ENCODE measurements at regions of chr6 and their contacts with region 1.

Region 1: GRCh38 chr6:29632789-29633533 is at the start of gene GABBR1:
- DNase-seq: peak; percentile 92
- H3K4me3 ChIP-seq: peak within 1 kb of the TSS; percentile 60 to 84 (median 65)
- H3K27ac ChIP-seq: peak within 1 kb of the TSS; percentile 22
- H3K4me1 ChIP-seq: peaks cover 43% of the 10 kb centered on the region
- H3K27me3 ChIP-seq: no peaks in the 10 kb centered on the region
- CTCF ChIP-seq: no peak
- total RNA-seq, gene GABBR1: 14.5 to 78.4 TPM

Region 2: DNA sequence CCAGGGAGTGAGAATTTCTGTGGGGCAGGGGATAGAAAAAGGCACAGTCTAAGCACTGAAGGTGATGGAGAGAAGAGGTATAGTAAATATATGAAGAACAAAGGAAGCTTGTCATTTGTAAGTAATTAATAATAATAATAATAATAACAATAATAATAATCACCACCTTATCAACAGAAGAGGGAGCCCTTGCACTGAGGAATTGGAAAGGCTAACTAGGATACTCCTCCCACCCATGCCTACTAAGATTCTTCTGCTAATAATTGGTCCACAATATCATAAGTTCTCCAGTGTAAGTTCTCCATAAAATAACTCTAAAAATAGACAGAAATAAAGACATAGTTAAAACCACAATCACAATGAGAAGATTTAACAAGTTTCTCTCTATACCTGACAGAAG is 257.0 kb before region 1 on chr6:
- CTCF ChIA-PET with region 1: interaction called, 3 read pairs
- dilution Hi-C with region 1: no loop called
- in situ Hi-C with region 1: no loop called
- intact Hi-C with region 1: loop called (anchors 1 kb)
- DNase-seq: peak; percentile 6
- H3K4me3 ChIP-seq: no peak overlapping the region
- H3K27ac ChIP-seq: no peak overlapping the region
- H3K4me1 ChIP-seq: no peaks in the 10 kb centered on the region
- H3K27me3 ChIP-seq: no peaks in the 10 kb centered on the region
- CTCF ChIP-seq: peak; percentile 28 to 39

Region 3: DNA sequence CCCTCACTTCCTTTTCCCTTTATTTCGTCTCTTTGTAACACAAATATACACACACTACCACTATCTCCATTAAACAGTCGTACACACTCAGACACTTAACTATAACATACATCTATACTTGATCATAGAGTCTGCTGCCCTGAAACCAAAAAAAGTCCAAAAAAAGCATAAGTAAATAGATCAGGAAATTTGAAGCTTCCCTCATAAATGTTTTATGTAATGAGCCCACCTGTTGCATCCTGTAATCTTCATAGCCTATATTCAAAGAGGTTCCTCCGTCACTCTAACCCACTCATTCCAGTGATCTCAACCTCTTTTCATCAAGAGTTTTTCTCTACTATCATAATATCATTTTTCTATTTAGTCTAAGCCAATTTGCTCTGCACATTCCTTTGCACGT is 244.4 kb before region 1 on chr6:
- CTCF ChIA-PET with region 1: interaction called, 10 read pairs
- dilution Hi-C with region 1: no loop called
- in situ Hi-C with region 1: no loop called
- intact Hi-C with region 1: no loop called
- DNase-seq: no peak
- H3K4me3 ChIP-seq: no peak overlapping the region
- H3K27ac ChIP-seq: no peak overlapping the region
- H3K4me1 ChIP-seq: no peaks in the 10 kb centered on the region
- H3K27me3 ChIP-seq: no peaks in the 10 kb centered on the region
- CTCF ChIP-seq: no peak

Region 4: GRCh38 chr6:29414588-29414987 is 218.4 kb before region 1 on chr6 and contains the start of gene OR12D1:
- CTCF ChIA-PET with region 1: no interaction called
- dilution Hi-C with region 1: no loop called
- in situ Hi-C with region 1: no loop called
- intact Hi-C with region 1: loop called (anchors 1 kb)
- DNase-seq: peak; percentile 65
- H3K4me3 ChIP-seq: no peak within 1 kb of the TSS
- H3K27ac ChIP-seq: no peak within 1 kb of the TSS
- H3K4me1 ChIP-seq: no peaks in the 10 kb centered on the region
- H3K27me3 ChIP-seq: peaks cover 4% of the 10 kb centered on the region
- CTCF ChIP-seq: peak; percentile 55 to 79
- total RNA-seq, gene OR12D1: not detected

Measured in mammary epithelial cell (primary cell).